Left ventricle myocardium superior (tissue), 1 donor: ENCODE measurements at regions of chr4 and their contacts with region 1.

Region 1: GRCh38 chr4:153318696-153319320 is 25.7 kb upstream of the MND1 start:
- DNase-seq: no peak
- ATAC-seq: peak; percentile 67

Region 2: GRCh38 chr4:153146031-153146430 is 172.8 kb before region 1 on chr4:
- intact Hi-C with region 1: loop called (anchors 5 kb)
- DNase-seq: no peak
- ATAC-seq: no peak

Region 3: GRCh38 chr4:153204247-153205027 is 114.4 kb before region 1 on chr4 and contains the start of gene TRIM2:
- intact Hi-C with region 1: loop called (anchors 5 kb)
- DNase-seq: peak; percentile 78
- ATAC-seq: peak; percentile 95
- total RNA-seq, gene TRIM2: 18.6 TPM

Region 4: GRCh38 chr4:153877898-153878297 is 559.1 kb after region 1 on chr4:
- intact Hi-C with region 1: no loop called
- DNase-seq: no peak
- ATAC-seq: no peak